ENCODE measurements at regions of chr18 and their contacts with region 1.

Region 1: DNA sequence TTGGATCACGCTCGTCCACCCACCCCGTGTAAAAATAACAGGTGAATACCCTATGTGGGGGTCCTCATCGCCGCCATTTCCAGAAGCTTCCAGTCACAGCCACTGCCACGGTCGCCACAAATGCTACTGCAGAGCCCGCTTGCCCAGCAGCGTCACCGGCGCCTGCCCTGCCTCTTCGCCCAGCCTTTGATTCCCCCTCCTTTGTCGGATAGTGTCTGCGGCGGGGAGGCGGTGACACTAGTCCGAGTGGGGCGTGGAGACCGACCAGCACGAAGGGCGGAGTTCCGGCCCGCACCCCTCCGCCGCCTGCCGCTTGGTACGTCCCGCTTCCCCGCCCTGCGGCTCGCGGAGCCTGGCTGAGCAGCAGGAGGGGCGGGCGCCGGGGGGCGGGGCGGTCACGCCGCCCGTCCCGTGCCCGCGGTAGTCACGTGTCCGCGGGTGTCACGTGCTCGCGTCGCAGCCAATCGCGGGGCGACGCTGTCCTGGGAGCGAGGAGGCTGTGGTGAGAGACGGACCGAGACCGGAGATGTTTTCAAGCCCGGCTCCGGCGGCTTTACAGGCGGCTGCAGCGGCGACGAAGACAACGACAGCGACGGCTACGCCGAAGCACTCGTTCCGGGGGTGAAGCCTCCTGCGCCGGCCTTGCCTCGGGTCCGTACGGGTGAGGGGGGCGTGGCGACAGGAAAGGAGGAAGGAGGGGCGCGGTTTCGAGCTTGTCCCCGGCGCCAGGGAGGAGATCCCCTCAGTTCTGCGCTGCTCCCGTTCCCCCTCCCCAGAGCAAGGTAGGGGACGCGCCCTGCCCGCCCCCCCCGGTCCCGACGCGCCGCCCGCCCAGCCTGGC is at the start of gene ANKRD12:
- DNase-seq: peak; percentile 98
- ATAC-seq: peak; percentile 77
- H3K4me3 Mint-ChIP-seq: peak within 1 kb of the TSS; percentile 96
- H3K27ac Mint-ChIP-seq: peak within 1 kb of the TSS; percentile 99
- H3K4me1 Mint-ChIP-seq: peaks cover 56% of the 10 kb centered on the region
- H3K27me3 Mint-ChIP-seq: no peaks in the 10 kb centered on the region
- total RNA-seq, gene ANKRD12: 60.8 to 68.9 TPM

Region 2: GRCh38 chr18:8816816-8817215 is 319.7 kb before region 1 on chr18:
- CTCF ChIA-PET with region 1: no interaction called
- POLR2A ChIA-PET with region 1: no interaction called
- DNase-seq: no peak
- ATAC-seq: no peak
- H3K4me3 Mint-ChIP-seq: no peak overlapping the region
- H3K27ac Mint-ChIP-seq: no peak overlapping the region
- H3K4me1 Mint-ChIP-seq: no peaks in the 10 kb centered on the region
- H3K27me3 Mint-ChIP-seq: peaks cover 10% of the 10 kb centered on the region

Region 3: DNA sequence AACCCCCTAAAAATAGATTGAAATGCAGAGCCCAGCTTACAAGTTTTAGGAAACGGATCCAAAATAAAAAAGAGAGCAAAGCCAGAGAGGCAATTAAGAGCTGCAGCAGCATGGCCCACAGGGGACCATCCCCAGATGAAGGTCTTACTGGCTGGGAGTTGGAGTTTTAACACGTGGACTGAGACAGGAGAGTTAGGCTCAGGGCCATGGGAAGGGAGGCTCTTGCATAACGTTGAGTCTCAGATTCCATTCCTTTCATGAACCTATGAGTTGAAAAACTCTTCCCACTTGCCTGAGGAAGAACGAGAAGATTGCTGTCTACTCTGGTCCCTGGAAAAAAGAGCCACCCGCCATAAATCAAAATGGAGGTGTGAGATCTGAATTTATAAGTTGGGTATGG is 135.8 kb before region 1 on chr18:
- CTCF ChIA-PET with region 1: no interaction called
- POLR2A ChIA-PET with region 1: no interaction called
- DNase-seq: no peak
- ATAC-seq: no peak
- H3K4me3 Mint-ChIP-seq: no peak overlapping the region
- H3K27ac Mint-ChIP-seq: no peak overlapping the region
- H3K4me1 Mint-ChIP-seq: no peaks in the 10 kb centered on the region
- H3K27me3 Mint-ChIP-seq: peaks cover 20% of the 10 kb centered on the region

Region 4: GRCh38 chr18:9069601-9070000 is 66.9 kb before region 1 on chr18:
- CTCF ChIA-PET with region 1: interaction called, 20 read pairs
- POLR2A ChIA-PET with region 1: interaction called, 11 read pairs
- DNase-seq: no peak
- ATAC-seq: no peak
- H3K4me3 Mint-ChIP-seq: no peak overlapping the region
- H3K27ac Mint-ChIP-seq: peak overlapping the region; percentile 49
- H3K4me1 Mint-ChIP-seq: peaks cover 18% of the 10 kb centered on the region
- H3K27me3 Mint-ChIP-seq: no peaks in the 10 kb centered on the region

Region 5: GRCh38 chr18:9095297-9096006 is 41.1 kb before region 1 on chr18:
- CTCF ChIA-PET with region 1: interaction called, 4 read pairs
- POLR2A ChIA-PET with region 1: interaction called, 230 read pairs
- DNase-seq: peak; percentile 78
- ATAC-seq: peak; percentile 66
- H3K4me3 Mint-ChIP-seq: peak overlapping the region; percentile 54
- H3K27ac Mint-ChIP-seq: peak overlapping the region; percentile 91
- H3K4me1 Mint-ChIP-seq: peaks cover 61% of the 10 kb centered on the region
- H3K27me3 Mint-ChIP-seq: no peaks in the 10 kb centered on the region

Region 6: DNA sequence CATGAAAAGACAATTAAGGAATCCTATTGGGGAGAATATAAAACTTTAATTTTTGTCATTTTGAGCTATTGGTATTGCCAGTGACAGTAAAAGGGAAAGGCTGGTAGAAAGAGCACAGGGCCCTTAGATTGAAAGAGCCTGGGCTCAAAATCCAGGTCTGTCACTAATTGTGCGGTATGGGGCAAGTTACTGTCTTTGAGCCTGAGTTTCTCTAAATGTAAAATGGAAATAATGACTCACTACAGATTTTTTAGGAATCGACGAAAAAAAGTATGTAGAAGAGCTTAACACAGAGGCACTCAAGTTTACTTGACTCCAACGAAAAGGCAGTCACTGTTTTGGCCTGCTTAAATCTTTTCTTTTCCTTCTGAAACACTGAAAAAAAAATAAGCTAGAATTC is 27.0 kb before region 1 on chr18:
- CTCF ChIA-PET with region 1: interaction called, 49 read pairs
- POLR2A ChIA-PET with region 1: interaction called, 230 read pairs
- DNase-seq: no peak
- ATAC-seq: no peak
- H3K4me3 Mint-ChIP-seq: peak overlapping the region; percentile 30
- H3K27ac Mint-ChIP-seq: peak overlapping the region; percentile 62
- H3K4me1 Mint-ChIP-seq: peaks cover 83% of the 10 kb centered on the region
- H3K27me3 Mint-ChIP-seq: no peaks in the 10 kb centered on the region

Region 7: DNA sequence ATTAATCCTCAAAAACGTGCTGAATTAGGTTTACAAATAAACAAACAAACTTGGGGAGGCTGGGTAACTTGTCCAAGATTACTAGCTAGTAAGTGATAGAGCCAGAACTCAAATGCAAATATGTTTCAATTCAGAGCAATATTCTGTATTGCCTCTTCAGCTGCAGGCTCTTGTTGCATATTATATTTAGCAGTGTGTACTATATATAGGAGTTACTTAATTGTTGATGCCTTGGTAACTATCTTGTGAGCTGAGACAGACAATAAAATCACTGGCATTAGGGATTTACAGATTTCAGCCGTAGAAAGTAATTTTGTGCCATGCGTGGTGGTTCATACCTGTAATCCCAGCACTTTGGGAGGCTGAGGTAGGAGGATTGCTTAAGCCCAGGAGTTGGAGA is 10.2 kb before region 1 on chr18:
- CTCF ChIA-PET with region 1: interaction called, 16 read pairs
- POLR2A ChIA-PET with region 1: interaction called, 24 read pairs
- DNase-seq: no peak
- ATAC-seq: no peak
- H3K4me3 Mint-ChIP-seq: no peak overlapping the region
- H3K27ac Mint-ChIP-seq: no peak overlapping the region
- H3K4me1 Mint-ChIP-seq: peaks cover 11% of the 10 kb centered on the region
- H3K27me3 Mint-ChIP-seq: no peaks in the 10 kb centered on the region